ENCODE measurements at regions of chr19 and their contacts with region 1.

Region 1: GRCh38 chr19:15418588-15419412 is at the start of gene AKAP8L:
- DNase-seq: peak; percentile 98
- H3K4me3 ChIP-seq: peak within 1 kb of the TSS; percentile 84 to 100 (median 99)
- H3K27ac ChIP-seq: peak within 1 kb of the TSS; percentile 48 to 94 (median 90)
- H3K4me1 ChIP-seq: peaks cover 14 to 58% (median 45%) of the 10 kb centered on the region in 6 donors
- H3K27me3 ChIP-seq: no peaks in the 10 kb centered on the region
- CTCF ChIP-seq: peak; percentile 79 to 97 (median 94)
- POLR2A ChIP-seq: peak in 2 of 3 donors; percentile 21 to 83
- total RNA-seq, gene AKAP8L: 121 to 236 (median 140) TPM

Region 2: GRCh38 chr19:15379083-15379995 is 39.5 kb before region 1 on chr19 and contains the start of gene AKAP8:
- intact Hi-C with region 1: loop called (anchors 5 kb)
- DNase-seq: peak; percentile 99
- H3K4me3 ChIP-seq: peak within 1 kb of the TSS; percentile 87 to 100 (median 98)
- H3K27ac ChIP-seq: peak within 1 kb of the TSS; percentile 95 to 99 (median 97)
- H3K4me1 ChIP-seq: peaks cover 32 to 57% (median 49%) of the 10 kb centered on the region in 6 donors
- H3K27me3 ChIP-seq: no peaks in the 10 kb centered on the region
- CTCF ChIP-seq: peak in 1 of 11 experiments; percentile 19
- POLR2A ChIP-seq: peak in 2 of 3 donors; percentile 57 to 76
- total RNA-seq, gene AKAP8: 24.9 to 51.3 (median 48.9) TPM

Region 3: DNA sequence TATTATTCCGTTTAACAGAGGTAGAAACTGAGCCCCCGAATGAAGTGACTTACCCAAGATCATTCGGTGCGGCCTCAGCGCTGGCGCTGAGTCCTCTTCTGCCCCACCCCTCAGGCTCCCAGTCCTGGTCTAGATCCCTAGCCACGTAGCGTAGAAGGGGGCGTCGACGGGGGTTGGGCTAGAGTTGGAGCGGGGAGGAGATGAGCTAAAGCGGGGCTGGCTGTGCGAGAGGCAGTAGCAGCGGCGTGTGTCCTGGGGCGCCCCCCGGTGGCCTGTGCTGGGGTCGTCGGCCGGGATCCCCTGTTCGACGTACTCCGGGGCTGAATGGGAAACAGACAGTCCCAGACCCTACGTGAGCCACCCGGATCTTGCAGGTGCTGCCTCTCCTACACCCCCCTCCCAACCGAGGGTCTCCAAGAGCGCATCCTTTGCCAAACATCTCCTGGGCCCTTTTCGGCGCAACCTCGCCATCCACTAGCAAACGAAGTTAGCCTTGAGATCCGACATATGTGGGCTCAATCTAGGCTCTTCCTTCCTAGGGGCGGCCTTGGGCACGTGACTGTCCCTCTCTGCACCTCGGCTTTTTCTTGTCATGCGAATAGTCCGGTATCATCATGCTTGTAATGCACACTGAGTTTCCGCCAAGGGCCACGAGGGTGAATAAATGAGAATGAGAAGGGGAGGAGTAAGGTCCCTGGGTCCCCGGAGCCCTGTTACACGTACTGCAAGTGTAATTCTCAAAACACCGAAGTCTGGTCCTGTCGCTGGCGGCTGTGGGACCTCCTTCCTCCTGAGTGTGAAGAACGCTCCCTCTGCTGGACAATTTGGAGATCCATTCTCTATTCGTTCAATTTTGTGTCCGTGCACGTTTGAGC is 137.2 kb after region 1 on chr19:
- intact Hi-C with region 1: loop called (anchors 2 kb)
- DNase-seq: peak; percentile 97
- H3K4me3 ChIP-seq: peak overlapping the region; percentile 15 to 70 (median 34)
- H3K27ac ChIP-seq: peak overlapping the region; percentile 13 to 81 (median 61)
- H3K4me1 ChIP-seq: peaks cover 6 to 27% (median 21%) of the 10 kb centered on the region in 6 donors
- H3K27me3 ChIP-seq: peaks cover 0 to 58% (median 6%) of the 10 kb centered on the region in 7 donors
- CTCF ChIP-seq: peak; percentile 54 to 92 (median 79)
- POLR2A ChIP-seq: no peak